A549 (cell line): ENCODE measurements at regions of chr7 and their contacts with region 1.

Region 1: GRCh38 chr7:151782598-151783448 is 94.1 kb downstream of the PRKAG2 start:
- DNase-seq: peak; percentile 70 to 90
- ATAC-seq: peak; percentile 94 to 98
- H3K4me3 ChIP-seq: peak overlapping the region; percentile 35
- H3K27ac ChIP-seq: peak overlapping the region; percentile 62 to 70
- H3K4me1 ChIP-seq: 0 out of 3 replicates have a peak, but pooled peaks cover 4% of the 10 kb centered on the region
- CTCF ChIP-seq: peak; percentile 99
- EP300 ChIP-seq: no peak
- POLR2A ChIP-seq: no peak
- RAD21 ChIP-seq: peak; percentile 72 to 92

Region 2: GRCh38 chr7:151608031-151608551 is 174.7 kb before region 1 on chr7:
- CTCF ChIA-PET with region 1: no interaction called
- POLR2A ChIA-PET with region 1: no interaction called
- DNase-seq: peak in 1 of 2 experiments; percentile 18
- ATAC-seq: peak; percentile 54 to 75; a peak in 5 of 6 replicates
- H3K4me3 ChIP-seq: no peak overlapping the region
- H3K27ac ChIP-seq: peak overlapping the region in 1 of 2 experiments; percentile 59; a peak in 3 of 6 replicates
- H3K4me1 ChIP-seq: peaks cover 28% of the 10 kb centered on the region
- CTCF ChIP-seq: no peak; the same call in 2 of the 3 replicates
- EP300 ChIP-seq: no peak
- POLR2A ChIP-seq: no peak
- RAD21 ChIP-seq: peak; percentile 19 to 50; a peak in 2 of 5 replicates

Region 3: GRCh38 chr7:151736403-151736909 is 46.4 kb before region 1 on chr7:
- CTCF ChIA-PET with region 1: interaction called, 13 read pairs
- POLR2A ChIA-PET with region 1: no interaction called
- DNase-seq: peak; percentile 84 to 98
- ATAC-seq: peak; percentile 93 to 94
- H3K4me3 ChIP-seq: peak overlapping the region; percentile 46
- H3K27ac ChIP-seq: peak overlapping the region; percentile 78 to 85
- H3K4me1 ChIP-seq: peaks cover 17% of the 10 kb centered on the region
- CTCF ChIP-seq: no peak
- EP300 ChIP-seq: no peak; a peak in 1 of 5 replicates
- POLR2A ChIP-seq: 0 out of 2 replicates have a peak, but pooled peaks have one; percentile 21
- RAD21 ChIP-seq: no peak; a peak in 1 of 5 replicates

Region 4: GRCh38 chr7:151795168-151795811 is 12.5 kb after region 1 on chr7:
- CTCF ChIA-PET with region 1: interaction called, 153 read pairs
- POLR2A ChIA-PET with region 1: no interaction called
- DNase-seq: no peak
- ATAC-seq: no peak
- H3K4me3 ChIP-seq: no peak overlapping the region
- H3K27ac ChIP-seq: peak overlapping the region in 1 of 2 experiments; percentile 11; a peak in 1 of 6 replicates
- H3K4me1 ChIP-seq: peaks cover 25% of the 10 kb centered on the region
- CTCF ChIP-seq: no peak
- EP300 ChIP-seq: no peak
- POLR2A ChIP-seq: no peak
- RAD21 ChIP-seq: no peak

Region 5: DNA sequence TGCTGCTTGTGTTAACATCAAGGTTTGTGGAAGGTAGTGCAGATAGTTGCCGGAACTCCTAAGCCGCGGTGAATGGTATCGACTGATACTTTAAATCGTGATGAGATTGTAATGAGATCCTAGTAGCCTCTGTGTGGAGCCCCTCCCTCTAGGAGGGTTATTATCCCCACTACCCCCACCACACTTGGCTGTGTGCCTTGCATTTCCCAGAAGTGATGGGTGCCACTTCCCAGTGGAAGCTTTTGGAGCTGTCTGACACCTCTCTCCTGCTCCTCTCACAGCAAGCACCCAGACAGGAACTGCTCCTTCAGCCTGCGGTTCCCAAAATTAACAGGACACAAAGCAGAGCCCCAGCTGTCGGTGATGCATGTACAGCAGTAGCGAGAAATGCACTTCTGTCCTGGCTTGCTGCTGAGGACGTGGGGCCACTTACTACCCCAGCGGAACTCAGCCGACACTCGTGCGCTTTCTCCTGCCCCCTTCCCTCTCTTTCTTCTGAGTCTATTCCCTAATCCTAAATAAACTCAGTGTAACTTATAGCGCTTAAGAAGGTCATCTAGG is 41.6 kb after region 1 on chr7:
- CTCF ChIA-PET with region 1: interaction called, 26 read pairs
- POLR2A ChIA-PET with region 1: no interaction called
- DNase-seq: no peak
- ATAC-seq: no peak
- H3K4me3 ChIP-seq: no peak overlapping the region
- H3K27ac ChIP-seq: no peak overlapping the region
- H3K4me1 ChIP-seq: no peaks in the 10 kb centered on the region
- CTCF ChIP-seq: no peak
- EP300 ChIP-seq: no peak
- POLR2A ChIP-seq: no peak
- RAD21 ChIP-seq: no peak

Region 6: DNA sequence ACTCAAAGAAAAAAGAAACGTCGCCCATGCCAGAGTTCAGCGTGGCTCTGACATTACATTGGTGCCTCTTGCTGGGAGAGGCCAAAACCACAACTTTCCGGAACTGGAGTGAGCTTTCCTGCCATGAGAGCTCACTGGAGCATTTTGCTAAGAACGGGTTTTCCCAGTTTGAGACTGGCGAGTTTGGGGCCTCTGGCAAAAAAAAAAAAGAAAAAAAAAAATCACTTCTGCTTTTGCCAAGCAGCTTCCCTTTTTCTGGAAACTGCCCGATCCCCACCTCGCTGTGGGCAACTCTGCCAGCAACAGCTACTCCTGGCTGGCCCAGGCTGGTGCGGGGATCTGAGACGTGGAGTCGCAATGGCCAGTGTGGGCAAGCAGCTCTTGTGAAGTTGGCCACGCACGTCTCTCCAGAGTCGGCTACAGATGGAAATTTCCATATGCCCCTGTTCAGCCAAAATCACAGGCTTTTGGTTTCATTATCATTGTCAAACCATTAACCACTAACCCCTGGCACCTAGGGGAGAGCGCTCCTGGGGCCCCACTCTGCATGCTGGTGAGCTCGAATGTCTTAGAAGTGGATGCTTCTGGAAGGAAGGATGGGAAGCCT is 68.4 kb after region 1 on chr7:
- CTCF ChIA-PET with region 1: interaction called, 40 read pairs
- POLR2A ChIA-PET with region 1: no interaction called
- DNase-seq: no peak
- ATAC-seq: no peak
- H3K4me3 ChIP-seq: no peak overlapping the region
- H3K27ac ChIP-seq: no peak overlapping the region
- H3K4me1 ChIP-seq: no peaks in the 10 kb centered on the region
- CTCF ChIP-seq: no peak
- EP300 ChIP-seq: no peak
- POLR2A ChIP-seq: no peak
- RAD21 ChIP-seq: no peak

Region 7: GRCh38 chr7:151884312-151885201 is 101.7 kb after region 1 on chr7:
- CTCF ChIA-PET with region 1: interaction called, 23 read pairs
- POLR2A ChIA-PET with region 1: no interaction called
- DNase-seq: no peak
- ATAC-seq: no peak
- H3K4me3 ChIP-seq: no peak overlapping the region
- H3K27ac ChIP-seq: no peak overlapping the region
- H3K4me1 ChIP-seq: no peaks in the 10 kb centered on the region
- CTCF ChIP-seq: no peak
- EP300 ChIP-seq: no peak
- POLR2A ChIP-seq: no peak
- RAD21 ChIP-seq: no peak